Endothelial cell of umbilical vein (primary cell): ENCODE measurements at regions of chr3 and their contacts with region 1.

Region 1: DNA sequence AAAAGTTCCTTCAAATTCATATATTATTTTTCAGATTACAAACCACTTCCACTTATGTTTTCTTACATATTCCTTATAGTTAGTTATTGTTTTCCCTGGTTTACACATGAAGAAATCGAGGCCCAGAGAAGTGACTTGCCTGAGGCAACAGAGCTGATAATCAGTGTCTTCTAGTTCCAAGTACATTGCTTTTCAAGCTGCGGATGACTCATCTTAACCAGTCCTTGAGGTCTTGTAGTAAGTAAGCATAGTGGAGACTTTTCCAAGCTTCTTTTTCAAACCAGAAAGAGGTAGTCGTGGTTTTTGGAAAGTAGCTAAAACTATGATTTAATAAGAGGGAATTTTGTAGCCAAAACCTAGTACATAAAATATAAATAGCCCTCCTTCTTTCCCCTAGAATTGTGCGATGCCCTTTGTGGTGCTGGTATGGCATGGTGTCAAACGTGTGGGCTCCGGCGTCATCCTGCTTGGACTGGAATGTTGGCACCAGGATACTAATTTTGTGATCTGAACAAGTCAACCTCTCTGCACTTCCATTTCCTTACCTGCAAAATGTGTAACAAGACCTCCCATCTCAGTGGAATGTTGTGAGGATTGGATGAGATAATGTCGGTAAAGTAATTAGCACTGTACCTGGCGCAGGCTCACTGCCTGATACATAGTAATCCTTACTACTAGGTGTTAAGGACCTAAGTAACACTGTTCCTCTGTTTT is 19.0 kb upstream of the DLG1 start:
- DNase-seq: no peak
- H3K4me3 ChIP-seq: no peak overlapping the region
- H3K27ac ChIP-seq: no peak overlapping the region
- H3K4me1 ChIP-seq: no peaks in the 10 kb centered on the region
- H3K27me3 ChIP-seq: no peaks in the 10 kb centered on the region
- CTCF ChIP-seq: no peak
- POLR2A ChIP-seq: no peak

Region 2: DNA sequence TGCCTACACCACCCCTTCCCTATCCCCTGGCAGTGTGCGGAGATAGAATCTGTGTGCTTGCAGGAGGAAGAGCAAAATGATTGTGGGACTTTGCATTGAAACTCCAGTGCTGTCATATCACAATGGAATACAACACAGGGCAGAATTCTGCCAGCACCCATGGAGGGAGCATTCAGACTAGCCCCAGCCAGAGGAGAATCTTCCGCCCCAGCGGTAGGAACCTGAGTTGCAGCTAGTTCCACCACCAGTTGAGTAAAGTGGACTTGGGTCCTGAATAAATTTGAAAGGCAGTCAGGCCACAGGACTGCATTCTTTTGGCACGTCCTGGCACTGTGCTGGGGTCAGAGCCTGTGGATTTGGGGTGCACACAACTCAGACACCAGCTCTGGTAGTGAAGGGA is 402.5 kb before region 1 on chr3:
- CTCF ChIA-PET with region 1: no interaction called
- POLR2A ChIA-PET with region 1: interaction called, 12 read pairs
- dilution Hi-C with region 1: no loop called
- intact Hi-C with region 1: no loop called
- DNase-seq: no peak
- H3K4me3 ChIP-seq: no peak overlapping the region
- H3K27ac ChIP-seq: no peak overlapping the region
- H3K4me1 ChIP-seq: no peaks in the 10 kb centered on the region
- H3K27me3 ChIP-seq: no peaks in the 10 kb centered on the region
- CTCF ChIP-seq: no peak
- POLR2A ChIP-seq: no peak